Gastrocnemius medialis (tissue), 4 donors: ENCODE measurements at regions of chr3 and their contacts with region 1.

Region 1: GRCh38 chr3:101724329-101725193 is at the start of gene CEP97:
- DNase-seq: peak; percentile 86 to 90
- ATAC-seq: peak; percentile 98 to 99
- H3K4me3 ChIP-seq: peak within 1 kb of the TSS; percentile 76 to 87 (median 85)
- H3K27ac ChIP-seq: peak within 1 kb of the TSS; percentile 74 to 81 (median 76)
- H3K4me1 ChIP-seq: peaks cover 10 to 32% of the 10 kb centered on the region in 2 donors
- H3K27me3 ChIP-seq: no peaks in the 10 kb centered on the region
- CTCF ChIP-seq: no peak
- POLR2A ChIP-seq: peak; percentile 33
- total RNA-seq, gene CEP97: 8.3 to 20.0 (median 13.2) TPM

Region 2: GRCh38 chr3:101676765-101677435 is 47.7 kb before region 1 on chr3 and contains the start of gene ZBTB11:
- in situ Hi-C with region 1: no loop called
- intact Hi-C with region 1: loop called (anchors 1 kb)
- DNase-seq: peak; percentile 99
- ATAC-seq: peak; percentile 96 to 98
- H3K4me3 ChIP-seq: peak within 1 kb of the TSS; percentile 86 to 100 (median 99)
- H3K27ac ChIP-seq: peak within 1 kb of the TSS; percentile 95 to 99 (median 98)
- H3K4me1 ChIP-seq: peaks cover 17 to 23% of the 10 kb centered on the region in 2 donors
- H3K27me3 ChIP-seq: no peaks in the 10 kb centered on the region
- CTCF ChIP-seq: peak in 2 of 5 experiments; percentile 32 to 35
- POLR2A ChIP-seq: peak; percentile 88 to 92
- total RNA-seq, gene ZBTB11: 14.6 to 20.9 (median 16.1) TPM

Region 3: DNA sequence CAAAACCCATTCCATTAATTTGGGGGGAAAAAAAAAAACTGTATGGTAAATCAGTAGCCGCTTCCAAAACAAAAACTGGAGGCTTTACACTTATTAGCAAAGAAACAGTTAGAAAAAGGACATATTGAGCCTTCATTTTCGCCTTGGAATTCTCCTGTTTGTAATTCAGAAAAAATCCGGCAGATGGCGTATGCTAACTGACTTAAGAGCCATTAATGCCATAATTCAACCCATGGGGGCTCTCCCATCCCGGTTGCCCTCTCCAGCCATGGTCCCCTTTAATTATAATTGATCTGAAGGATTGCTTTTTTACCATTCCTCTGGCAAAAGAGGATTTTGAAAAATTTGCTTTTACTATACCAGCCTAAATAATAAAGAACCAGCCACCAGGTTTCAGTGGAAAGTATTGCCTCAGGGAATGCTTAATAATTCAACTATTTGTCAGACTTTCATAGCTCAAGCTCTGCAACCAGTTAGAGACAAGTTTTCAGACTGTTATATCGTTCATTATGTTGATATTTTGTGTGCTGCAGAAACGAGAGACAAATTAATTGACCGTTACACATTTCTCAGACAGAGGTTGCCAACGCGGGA is 28.7 kb before region 1 on chr3:
- in situ Hi-C with region 1: no loop called
- intact Hi-C with region 1: loop called (anchors 1 kb)
- DNase-seq: no peak
- ATAC-seq: no peak
- H3K4me3 ChIP-seq: no peak overlapping the region
- H3K27ac ChIP-seq: no peak overlapping the region
- H3K4me1 ChIP-seq: no peaks in the 10 kb centered on the region
- H3K27me3 ChIP-seq: no peaks in the 10 kb centered on the region
- CTCF ChIP-seq: peak; percentile 65 to 83 (median 67)
- POLR2A ChIP-seq: no peak

Region 4: DNA sequence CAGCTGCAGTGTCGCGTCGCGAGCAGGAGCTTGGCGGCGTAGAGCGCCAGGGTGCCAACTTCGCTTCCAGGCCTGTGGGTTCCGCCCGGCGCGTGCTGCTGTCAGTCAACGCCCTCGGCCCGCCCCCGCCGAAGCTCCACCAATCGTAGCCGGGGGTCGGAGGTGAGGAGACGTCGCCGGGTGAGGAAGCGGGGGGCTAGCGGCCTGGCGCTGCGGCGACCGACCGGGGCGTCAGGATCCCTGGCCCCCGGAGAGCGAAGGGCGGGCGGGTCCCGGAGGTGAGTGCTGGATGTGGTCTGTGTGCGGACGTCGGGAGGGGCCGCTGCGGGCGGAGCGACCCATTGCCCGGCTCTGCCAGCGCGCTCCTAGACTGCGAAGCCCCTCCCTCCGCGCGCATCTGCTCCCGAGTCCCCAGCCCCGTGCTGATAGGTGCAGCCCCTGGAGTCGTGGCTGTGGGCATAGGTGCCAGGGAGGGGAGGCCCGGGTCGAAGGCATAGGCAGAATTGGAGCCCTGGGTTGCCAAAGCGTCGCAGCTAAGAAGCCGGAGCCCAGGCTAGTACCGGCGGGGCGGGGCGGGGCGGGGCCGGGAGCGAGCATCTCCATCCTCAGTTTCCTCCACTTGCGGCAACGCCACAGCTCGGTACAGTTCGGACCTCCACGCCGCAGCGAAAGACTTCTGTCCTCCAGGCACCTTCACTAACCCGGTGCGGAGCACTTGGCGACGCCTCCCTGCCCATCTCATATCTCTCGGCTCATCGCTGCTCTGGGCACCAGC is 54.7 kb after region 1 on chr3 and contains the start of gene NXPE3:
- in situ Hi-C with region 1: no loop called
- intact Hi-C with region 1: loop called (anchors 1 kb)
- DNase-seq: peak; percentile 93 to 94
- ATAC-seq: peak; percentile 76 to 87
- H3K4me3 ChIP-seq: peak within 1 kb of the TSS; percentile 74 to 84 (median 77)
- H3K27ac ChIP-seq: peak within 1 kb of the TSS; percentile 89 to 94 (median 90)
- H3K4me1 ChIP-seq: peaks cover 38 to 49% of the 10 kb centered on the region in 2 donors
- H3K27me3 ChIP-seq: no peaks in the 10 kb centered on the region
- CTCF ChIP-seq: no peak
- POLR2A ChIP-seq: peak; percentile 77
- total RNA-seq, gene NXPE3: 31.5 to 52.0 (median 44.5) TPM

Region 5: GRCh38 chr3:102593812-102594602 is 869.4 kb after region 1 on chr3:
- in situ Hi-C with region 1: no loop called
- intact Hi-C with region 1: no loop called
- DNase-seq: no peak
- ATAC-seq: no peak
- H3K4me3 ChIP-seq: no peak overlapping the region
- H3K27ac ChIP-seq: no peak overlapping the region
- H3K4me1 ChIP-seq: no peaks in the 10 kb centered on the region
- H3K27me3 ChIP-seq: no peaks in the 10 kb centered on the region
- CTCF ChIP-seq: no peak
- POLR2A ChIP-seq: no peak